Heart right ventricle (tissue), 16 donors: ENCODE measurements at regions of chr2 and their contacts with region 1.

Region 1: GRCh38 chr2:226977775-226978190 is 141.9 kb downstream of the RHBDD1 start:
- DNase-seq: no peak
- ATAC-seq: no peak
- H3K4me3 ChIP-seq: no peak overlapping the region
- H3K27ac ChIP-seq: no peak overlapping the region
- H3K4me1 ChIP-seq: peaks cover 0 to 8% (median 0%) of the 10 kb centered on the region in 9 donors
- H3K27me3 ChIP-seq: no peaks in the 10 kb centered on the region
- CTCF ChIP-seq: no peak

Region 2: GRCh38 chr2:226835796-226836547 is 141.8 kb before region 1 on chr2 and contains the start of gene RHBDD1:
- intact Hi-C with region 1: loop called in 3 of 10 experiments (anchors 10 kb)
- DNase-seq: peak; percentile 94 to 95
- ATAC-seq: peak; percentile 99 to 100 (median 99)
- H3K4me3 ChIP-seq: peak within 1 kb of the TSS; percentile 61 to 89 (median 78)
- H3K27ac ChIP-seq: peak within 1 kb of the TSS; percentile 88 to 98 (median 96)
- H3K4me1 ChIP-seq: peaks cover 0 to 35% (median 22%) of the 10 kb centered on the region in 9 donors
- H3K27me3 ChIP-seq: no peaks in the 10 kb centered on the region
- CTCF ChIP-seq: no peak
- total RNA-seq, gene RHBDD1: 28.3 to 57.1 (median 39.1) TPM

Region 3: GRCh38 chr2:226934546-226935201 is 43.1 kb before region 1 on chr2:
- intact Hi-C with region 1: no loop called
- DNase-seq: no peak
- ATAC-seq: no peak
- H3K4me3 ChIP-seq: no peak overlapping the region
- H3K27ac ChIP-seq: no peak overlapping the region
- H3K4me1 ChIP-seq: no peaks in the 10 kb centered on the region
- H3K27me3 ChIP-seq: no peaks in the 10 kb centered on the region
- CTCF ChIP-seq: no peak